Posterior cingulate gyrus (tissue), 11 donors: ENCODE measurements at regions of chr1 and their contacts with region 1.

Region 1: GRCh38 chr1:151070474-151071276 is at the start of gene GABPB2:
- DNase-seq: peak; percentile 78 to 98 (median 88)

Region 2: DNA sequence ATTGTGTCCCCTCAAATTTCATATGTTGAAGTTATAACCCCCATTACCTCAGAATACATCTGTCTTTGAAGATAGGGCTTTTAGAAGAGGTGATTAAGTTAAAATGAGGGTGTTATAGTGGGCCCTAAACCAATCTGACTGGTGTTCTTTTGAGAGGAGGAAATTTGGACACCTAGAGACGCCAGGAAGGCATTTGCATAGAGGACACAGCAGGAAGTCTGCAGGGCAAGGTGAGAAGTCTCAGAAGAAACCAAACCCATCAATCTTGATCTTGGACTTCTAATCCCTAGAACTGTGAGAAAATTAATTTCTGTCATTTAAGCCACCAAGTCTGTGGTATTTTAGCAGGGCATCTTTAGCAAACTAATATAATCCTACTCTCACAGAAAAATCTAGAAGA is 386.8 kb before region 1 on chr1:
- intact Hi-C with region 1: no loop called
- DNase-seq: no peak

Region 3: DNA sequence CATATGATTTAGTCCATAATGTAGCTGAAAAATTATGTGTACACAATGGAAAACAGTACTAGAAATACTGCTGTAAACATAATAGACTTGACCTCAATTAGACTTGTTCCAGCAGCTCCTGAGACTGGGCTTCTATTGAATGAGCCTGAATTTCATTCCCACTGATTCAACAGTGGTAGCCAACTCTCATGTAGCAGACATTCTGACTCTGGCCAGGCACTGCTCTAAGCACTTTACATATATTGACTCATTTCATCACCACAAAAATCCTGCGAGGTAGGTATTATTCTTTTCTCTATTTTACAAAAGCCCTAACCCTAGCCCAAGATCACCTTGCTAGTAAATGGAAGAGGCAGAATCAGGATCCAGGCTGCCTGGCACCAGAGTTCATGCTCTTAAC is 292.3 kb before region 1 on chr1:
- intact Hi-C with region 1: no loop called
- DNase-seq: no peak

Region 4: GRCh38 chr1:151008190-151008860 is 62.4 kb before region 1 on chr1 and contains the start of gene PRUNE1:
- intact Hi-C with region 1: no loop called
- DNase-seq: peak; percentile 94 to 99 (median 96)

Region 5: DNA sequence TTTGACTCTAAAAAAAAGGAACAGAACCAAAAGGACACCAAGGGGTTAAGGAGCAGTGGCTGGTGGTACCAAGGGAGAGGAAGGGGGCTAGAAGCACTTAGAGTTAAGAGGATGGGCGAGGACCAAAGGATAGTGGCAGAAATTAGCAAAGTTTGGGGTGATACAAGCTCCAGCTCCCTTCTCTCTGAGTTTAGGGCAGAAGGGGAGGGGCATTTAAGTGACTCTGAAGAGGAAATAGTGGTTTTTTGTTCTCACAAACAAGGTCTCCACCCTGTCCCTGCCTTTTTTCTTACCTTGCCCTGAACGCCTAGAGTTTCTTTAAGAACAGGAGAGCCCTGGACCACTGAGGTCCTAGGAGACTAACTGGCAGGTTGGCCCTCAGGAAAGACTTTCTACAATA is 14.5 kb before region 1 on chr1:
- intact Hi-C with region 1: loop called (anchors 2 kb)
- DNase-seq: no peak

Region 6: DNA sequence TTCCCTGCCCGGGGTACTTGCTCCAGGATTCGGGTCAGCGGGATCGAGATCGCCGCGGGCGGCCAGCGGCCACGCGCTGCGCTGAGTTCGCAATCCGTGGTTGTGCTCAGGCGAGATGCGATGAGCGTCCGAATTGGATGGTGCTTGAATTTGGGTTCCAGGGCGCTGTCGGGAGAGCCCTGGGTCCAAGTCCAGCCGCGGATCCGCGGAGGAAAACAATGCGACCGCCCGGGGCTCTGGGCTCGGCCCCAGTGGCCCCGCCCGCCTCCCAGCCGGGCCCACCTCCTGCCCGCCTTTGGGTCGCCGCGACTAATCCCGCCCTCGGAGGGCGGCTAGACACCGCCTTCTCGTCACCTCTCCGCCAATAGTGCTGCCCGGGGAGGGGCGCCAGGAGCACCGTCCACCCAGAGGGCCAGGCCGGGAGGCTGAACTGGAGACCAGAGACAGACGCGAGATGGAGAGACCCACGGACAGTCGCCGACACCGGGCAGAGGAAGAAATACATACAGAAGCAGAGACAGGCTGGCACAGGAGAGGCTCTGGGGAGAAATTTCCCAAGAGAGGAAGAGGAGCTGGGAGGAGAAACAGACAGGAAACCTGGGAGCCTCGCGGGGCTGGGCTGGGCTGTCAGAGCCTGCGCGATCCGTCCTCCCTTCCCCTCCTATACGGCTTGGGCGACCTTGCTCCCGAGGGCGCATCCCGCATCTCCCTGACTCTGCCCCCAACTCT is 75.9 kb after region 1 on chr1 and contains the start of gene SEMA6C:
- intact Hi-C with region 1: loop called (anchors 10 kb)
- DNase-seq: peak; percentile 92 to 100 (median 98)